ENCODE measurements at regions of chr17 and their contacts with region 1.

Region 1: GRCh38 chr17:27473748-27474609 is 17.7 kb downstream of the KSR1 start:
- DNase-seq: peak; percentile 51 to 86
- ATAC-seq: peak; percentile 55 to 76 (median 74)
- H3K4me3 ChIP-seq: peak overlapping the region; percentile 3
- H3K4me3 Mint-ChIP-seq: peak overlapping the region; percentile 81
- H3K27ac ChIP-seq: peak overlapping the region; percentile 81
- H3K27ac Mint-ChIP-seq: peak overlapping the region; percentile 91 to 96
- H3K4me1 ChIP-seq: peaks cover 78% of the 10 kb centered on the region
- H3K4me1 Mint-ChIP-seq: peaks cover 69 to 72% of the 10 kb centered on the region in 2 donors
- H3K27me3 ChIP-seq: no peaks in the 10 kb centered on the region
- H3K27me3 Mint-ChIP-seq: no peaks in the 10 kb centered on the region
- CTCF ChIP-seq: no peak

Region 2: DNA sequence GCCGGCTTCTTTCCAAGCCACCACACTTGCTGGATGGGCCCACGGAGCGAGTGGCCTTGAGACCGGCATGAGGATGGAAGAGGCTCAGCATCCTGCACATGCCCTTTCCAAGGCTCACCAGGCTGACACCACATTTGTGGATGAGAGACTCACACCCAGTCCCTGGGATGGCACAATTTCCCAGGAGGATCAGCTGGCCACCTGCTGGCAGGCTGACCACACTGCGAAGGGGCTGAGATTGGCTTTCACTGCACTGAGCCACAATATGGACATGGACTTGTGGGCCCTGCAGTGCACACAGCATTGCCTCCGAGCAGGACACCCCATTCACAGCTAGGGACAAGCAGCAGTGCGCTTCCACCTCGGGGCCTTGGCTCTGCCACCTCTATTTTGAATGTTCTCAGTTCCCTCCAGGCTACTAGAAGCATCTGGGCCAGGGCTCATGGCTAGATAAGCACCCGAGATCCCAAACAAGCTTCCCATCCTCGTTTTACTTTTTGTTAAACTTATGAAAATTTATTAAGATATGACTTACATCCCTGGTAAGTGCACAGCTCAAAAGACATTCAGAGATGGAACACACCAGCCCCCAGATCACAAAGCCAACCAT is 43.0 kb before region 1 on chr17:
- intact Hi-C with region 1: no loop called
- DNase-seq: peak in 1 of 2 donors; percentile 19
- ATAC-seq: no peak
- H3K4me3 ChIP-seq: no peak overlapping the region
- H3K4me3 Mint-ChIP-seq: no peak overlapping the region
- H3K27ac ChIP-seq: no peak overlapping the region
- H3K27ac Mint-ChIP-seq: no peak overlapping the region
- H3K4me1 ChIP-seq: no peaks in the 10 kb centered on the region
- H3K4me1 Mint-ChIP-seq: no peaks in the 10 kb centered on the region
- H3K27me3 ChIP-seq: no peaks in the 10 kb centered on the region
- H3K27me3 Mint-ChIP-seq: no peaks in the 10 kb centered on the region
- CTCF ChIP-seq: peak; percentile 23

Region 3: DNA sequence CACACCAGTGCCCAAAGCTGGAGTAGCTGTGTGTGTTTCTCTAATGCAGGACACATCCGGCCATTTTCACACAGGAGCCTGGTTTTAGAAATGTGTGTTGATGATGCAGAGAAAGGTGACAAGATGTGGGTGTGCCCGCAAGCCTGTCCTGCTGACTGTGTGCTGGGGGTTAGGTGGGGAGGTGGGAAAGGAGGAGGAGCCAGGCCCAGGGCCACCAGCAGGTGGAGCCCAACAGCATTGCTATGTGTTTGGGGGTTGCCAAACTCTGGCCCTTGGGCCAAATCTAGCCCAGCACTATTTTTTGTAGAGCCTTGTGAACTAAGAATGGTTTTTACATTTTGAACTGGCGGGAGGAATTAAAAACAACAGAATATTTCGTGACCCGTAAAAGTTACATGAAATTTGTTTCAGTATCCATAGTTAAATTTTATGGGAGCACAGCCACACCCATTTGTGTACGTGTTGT is 95.3 kb after region 1 on chr17:
- intact Hi-C with region 1: loop called (anchors 5 kb)
- DNase-seq: peak; percentile 79 to 80
- ATAC-seq: peak; percentile 97 to 99 (median 97)
- H3K4me3 ChIP-seq: no peak overlapping the region
- H3K4me3 Mint-ChIP-seq: peak overlapping the region; percentile 81
- H3K27ac ChIP-seq: peak overlapping the region; percentile 65
- H3K27ac Mint-ChIP-seq: peak overlapping the region; percentile 93 to 94
- H3K4me1 ChIP-seq: peaks cover 43% of the 10 kb centered on the region
- H3K4me1 Mint-ChIP-seq: peaks cover 53 to 58% of the 10 kb centered on the region in 2 donors
- H3K27me3 ChIP-seq: no peaks in the 10 kb centered on the region
- H3K27me3 Mint-ChIP-seq: no peaks in the 10 kb centered on the region
- CTCF ChIP-seq: peak; percentile 74